ENCODE measurements at regions of chr1 and their contacts with region 1.

Region 1: GRCh38 chr1:9110669-9111356 is 18.1 kb downstream of the GPR157 start:
- DNase-seq: peak; percentile 69 to 97
- H3K4me3 ChIP-seq: no peak overlapping the region
- H3K4me1 ChIP-seq: peaks cover 2% of the 10 kb centered on the region; the same call in 1 of the 2 replicates
- H3K27me3 ChIP-seq: no peaks in the 10 kb centered on the region

Region 2: DNA sequence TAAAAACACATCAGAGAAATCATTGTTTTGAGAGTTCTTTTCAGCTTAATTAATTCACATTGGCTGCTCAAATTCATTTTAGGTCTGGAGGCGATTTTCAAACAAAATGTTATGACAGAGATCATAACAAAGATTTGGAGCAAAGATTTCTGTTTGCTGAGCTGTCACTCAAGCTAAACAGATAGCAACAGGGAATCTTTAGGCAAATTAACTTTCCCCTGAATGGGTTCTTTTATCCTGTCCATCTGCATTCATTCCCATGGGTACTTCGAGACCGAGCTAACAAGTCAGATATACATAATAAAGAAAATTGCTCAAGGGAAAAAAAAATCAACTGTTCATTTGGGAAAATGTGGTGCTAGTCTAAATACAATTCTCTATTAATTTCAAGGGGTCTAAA is 195.4 kb before region 1 on chr1:
- in situ Hi-C with region 1: loop called (anchors 5 kb)
- DNase-seq: peak; percentile 52 to 95
- H3K4me3 ChIP-seq: no peak overlapping the region
- H3K4me1 ChIP-seq: peaks cover 25% of the 10 kb centered on the region
- H3K27me3 ChIP-seq: no peaks in the 10 kb centered on the region

Region 3: DNA sequence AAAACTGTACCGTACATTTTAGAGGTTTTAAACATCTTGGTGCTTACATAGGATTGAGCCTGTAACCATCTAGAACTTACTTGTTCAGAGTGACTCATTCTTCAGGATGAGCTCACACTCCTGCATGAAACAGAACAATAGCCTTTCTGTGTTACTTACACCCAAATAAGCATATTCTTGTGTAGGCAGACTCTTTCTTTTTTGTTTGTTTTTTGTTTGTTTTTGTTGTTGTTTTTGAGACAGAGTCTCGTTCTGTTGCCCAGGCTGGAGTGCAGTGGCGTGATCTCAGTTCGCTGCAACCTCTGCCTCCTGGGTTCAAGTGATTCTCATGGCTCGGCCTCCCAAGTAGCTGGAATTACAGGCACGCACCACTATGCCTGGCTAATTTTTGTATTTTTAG is 168.9 kb before region 1 on chr1:
- in situ Hi-C with region 1: no loop called
- DNase-seq: no peak
- H3K4me3 ChIP-seq: no peak overlapping the region
- H3K4me1 ChIP-seq: peaks cover 16% of the 10 kb centered on the region
- H3K27me3 ChIP-seq: no peaks in the 10 kb centered on the region

Region 4: DNA sequence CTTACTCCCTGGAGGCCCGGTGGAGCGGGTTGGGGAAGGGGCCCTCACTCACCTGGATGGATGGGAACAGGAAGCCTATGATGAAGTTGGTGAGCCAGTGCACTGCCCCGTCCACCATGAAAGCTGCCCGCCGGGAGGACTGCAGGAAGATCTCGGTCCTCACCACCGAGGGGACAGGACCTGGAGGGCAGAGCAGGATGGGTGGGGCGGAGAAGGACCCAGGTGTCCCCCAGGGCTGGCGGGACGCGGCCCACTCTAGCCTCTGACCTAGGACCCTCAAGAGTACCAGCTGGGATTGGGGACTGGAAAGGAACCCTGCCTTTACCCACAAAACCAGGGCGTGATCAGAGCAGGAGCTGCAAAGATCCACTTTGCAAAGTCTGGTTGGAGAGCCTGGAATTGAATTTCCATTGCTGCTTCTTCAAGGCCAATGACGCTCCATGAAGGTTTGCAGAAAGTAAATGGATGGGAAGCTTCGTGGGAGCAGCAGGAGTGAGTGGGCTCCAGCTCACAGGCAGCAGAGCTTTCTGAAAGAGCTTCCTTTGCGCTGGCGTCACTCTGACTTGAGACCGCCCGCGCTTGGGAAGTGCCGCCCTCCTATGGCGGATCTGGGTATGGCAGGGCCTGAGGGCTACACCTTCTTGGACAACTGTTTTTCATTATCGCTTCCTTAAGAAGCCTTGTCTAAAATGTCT is 106.0 kb before region 1 on chr1:
- in situ Hi-C with region 1: loop called (anchors 5 kb)
- DNase-seq: peak; percentile 76 to 92
- H3K4me3 ChIP-seq: no peak overlapping the region
- H3K4me1 ChIP-seq: peaks cover 6% of the 10 kb centered on the region; the same call in 1 of the 2 replicates
- H3K27me3 ChIP-seq: no peaks in the 10 kb centered on the region

Region 5: GRCh38 chr1:9196129-9197040 is 85.6 kb after region 1 on chr1:
- in situ Hi-C with region 1: loop called (anchors 10 kb)
- DNase-seq: peak; percentile 47 to 84
- H3K4me3 ChIP-seq: no peak overlapping the region
- H3K4me1 ChIP-seq: no peaks in the 10 kb centered on the region; the same call in 1 of the 2 replicates
- H3K27me3 ChIP-seq: peaks cover 13% of the 10 kb centered on the region

Region 6: DNA sequence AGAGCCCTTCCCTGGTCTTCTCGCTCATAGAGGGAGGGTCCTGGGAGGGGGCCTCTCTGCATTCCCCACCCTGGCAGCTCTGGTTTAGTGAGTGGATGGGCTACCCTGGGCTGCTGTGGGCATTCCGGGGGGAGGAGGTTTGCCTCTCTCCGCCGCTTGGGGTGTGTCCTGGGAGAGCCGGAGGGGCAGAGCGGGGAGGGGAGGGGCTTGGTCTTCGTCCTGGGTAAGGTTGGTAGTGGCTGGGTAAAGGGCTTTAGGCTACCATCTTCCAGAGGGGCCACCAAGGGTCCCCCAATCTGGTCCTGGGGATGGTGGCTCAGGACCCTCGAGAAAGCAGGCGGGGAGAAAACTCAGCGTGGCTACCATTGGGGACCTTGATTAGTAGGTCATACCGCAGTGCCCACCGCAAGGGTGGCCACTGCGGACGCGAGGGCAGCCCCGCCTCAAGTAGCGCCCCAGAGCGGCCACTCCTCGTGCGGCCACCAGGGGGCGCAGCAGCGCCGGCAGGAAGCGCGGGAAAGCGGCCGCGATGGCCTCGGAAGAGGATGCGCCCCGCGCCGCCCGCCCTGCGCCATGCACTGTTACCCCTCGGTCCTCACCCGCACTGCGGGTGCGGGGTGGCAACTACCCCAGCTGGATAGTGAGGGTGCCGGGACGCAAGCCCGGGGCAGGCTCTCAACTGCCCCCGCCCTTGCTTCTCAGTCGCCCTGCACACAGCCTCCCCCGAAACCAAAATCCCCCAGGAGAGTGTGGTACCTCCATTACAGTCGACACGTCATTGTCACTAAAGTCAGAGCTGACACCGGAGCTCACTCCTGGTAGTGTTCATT is 384.3 kb after region 1 on chr1:
- in situ Hi-C with region 1: loop called (anchors 25 kb)
- DNase-seq: peak; percentile 55 to 80
- H3K4me3 ChIP-seq: peak overlapping the region; percentile 18
- H3K4me1 ChIP-seq: peaks cover 8% of the 10 kb centered on the region
- H3K27me3 ChIP-seq: no peaks in the 10 kb centered on the region

Measured in HAP-1 (cell line).